Motor neuron (in vitro differentiated cells): ENCODE measurements at regions of chr19 and their contacts with region 1.

Region 1: DNA sequence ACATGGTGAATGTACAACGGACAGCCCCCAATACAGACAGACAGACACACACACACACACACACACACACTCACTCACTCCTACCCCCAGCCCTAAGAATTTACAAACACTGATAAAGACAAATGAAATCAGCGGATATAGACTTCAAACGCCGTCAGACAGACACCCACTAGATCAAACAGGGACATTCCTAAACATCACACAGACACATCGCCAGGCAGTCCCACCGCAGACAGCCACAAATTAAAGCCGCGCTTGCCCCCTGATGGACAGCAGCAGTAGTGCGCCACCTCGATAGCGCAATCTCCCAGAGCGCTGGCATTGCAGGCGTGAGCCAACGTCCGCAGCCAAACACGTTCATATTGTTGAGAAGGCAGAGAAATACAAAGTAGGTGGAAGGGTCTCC is 24.7 kb upstream of the ADGRE1 start:
- ATAC-seq: peak; percentile 67 to 95 (median 78)
- H3K4me3 ChIP-seq: no peak overlapping the region
- H3K27ac ChIP-seq: no peak overlapping the region
- H3K4me1 ChIP-seq: no peaks in the 10 kb centered on the region

Region 2: DNA sequence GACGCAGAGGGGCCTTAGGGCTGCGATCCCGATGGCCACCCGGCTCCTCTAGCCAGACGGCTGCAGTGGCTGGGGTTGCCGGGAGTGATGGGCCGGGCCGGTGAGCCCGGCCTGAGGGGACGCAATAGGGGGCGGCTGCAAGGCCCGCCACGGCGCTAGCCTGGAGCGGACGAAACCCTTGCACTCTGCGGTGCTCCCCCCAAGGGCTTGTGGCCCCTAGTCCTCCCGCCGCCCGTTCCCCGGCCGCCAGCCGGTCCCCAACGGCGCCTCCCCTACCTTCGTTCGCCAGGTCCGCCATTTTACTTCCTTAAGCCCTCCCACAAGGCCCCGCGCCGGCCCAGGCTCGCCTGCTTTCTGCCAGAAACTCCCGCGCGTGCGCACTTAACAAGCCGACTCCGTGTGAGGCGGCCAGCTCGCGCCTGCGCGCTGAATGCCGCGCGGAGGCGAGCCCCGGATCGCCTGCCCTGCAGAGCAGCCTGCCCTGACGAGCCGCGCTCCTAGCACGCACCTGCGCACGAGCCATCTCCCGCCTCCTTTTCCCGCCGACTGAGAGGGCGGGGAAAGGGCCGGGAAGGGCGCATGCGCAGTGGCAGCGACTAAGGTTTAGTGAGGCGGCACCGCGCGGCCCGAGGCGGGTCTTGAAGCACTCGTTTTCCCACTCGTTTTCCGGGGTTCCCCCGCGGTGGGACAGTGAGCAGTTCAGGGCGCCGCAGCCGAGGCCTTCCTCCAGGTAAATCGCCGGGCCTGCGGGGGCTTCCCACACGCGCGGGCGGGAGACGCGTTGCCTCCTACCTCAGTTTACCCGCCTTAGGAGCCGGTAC is 884.7 kb before region 1 on chr19 and contains the start of gene RANBP3:
- in situ Hi-C with region 1: loop called in 1 of 9 experiments (anchors 25 kb)
- ATAC-seq: peak; percentile 87 to 98 (median 94)
- H3K4me3 ChIP-seq: peak within 1 kb of the TSS; percentile 65 to 88 (median 82)
- H3K27ac ChIP-seq: peak within 1 kb of the TSS; percentile 89 to 94
- H3K4me1 ChIP-seq: peaks cover 34 to 40% of the 10 kb centered on the region in 2 donors
- total RNA-seq, gene RANBP3: 31.5 to 69.1 (median 41.0) TPM

Region 3: DNA sequence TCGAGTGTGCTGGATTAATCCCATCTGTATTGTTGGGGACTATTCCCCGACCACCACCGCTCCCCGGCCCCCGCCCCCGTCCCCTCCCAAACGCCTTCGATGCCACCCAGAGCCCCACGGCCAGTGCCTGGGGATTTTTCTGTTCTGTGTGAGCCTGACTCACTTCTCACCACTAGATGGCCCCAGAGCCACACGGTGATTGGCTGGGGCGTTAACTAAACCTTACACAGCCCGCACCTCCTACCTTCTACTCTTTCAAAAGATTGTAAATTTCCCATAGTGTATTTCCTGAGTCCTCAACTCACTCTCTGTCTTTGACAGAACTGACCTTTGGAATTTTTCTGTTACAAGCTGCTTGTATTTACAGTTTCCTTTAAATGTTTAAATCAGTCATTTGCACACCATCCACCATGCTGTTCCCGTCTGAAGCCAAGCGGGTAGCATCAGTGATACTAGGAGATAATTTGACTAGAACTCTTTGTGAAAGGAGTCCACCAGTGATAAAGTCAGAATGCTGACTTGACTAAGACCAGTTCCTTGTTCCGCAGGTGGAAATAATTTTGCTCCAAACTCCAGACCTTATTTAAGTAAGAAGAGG is 813.8 kb before region 1 on chr19:
- in situ Hi-C with region 1: loop called in 2 of 9 experiments (anchors 25 kb)
- ATAC-seq: peak; percentile 98 to 100 (median 99)
- H3K4me3 ChIP-seq: peak overlapping the region in 3 of 5 donors; percentile 10 to 26 (median 25)
- H3K27ac ChIP-seq: no peak overlapping the region
- H3K4me1 ChIP-seq: peaks cover 0 to 8% of the 10 kb centered on the region in 2 donors

Region 4: DNA sequence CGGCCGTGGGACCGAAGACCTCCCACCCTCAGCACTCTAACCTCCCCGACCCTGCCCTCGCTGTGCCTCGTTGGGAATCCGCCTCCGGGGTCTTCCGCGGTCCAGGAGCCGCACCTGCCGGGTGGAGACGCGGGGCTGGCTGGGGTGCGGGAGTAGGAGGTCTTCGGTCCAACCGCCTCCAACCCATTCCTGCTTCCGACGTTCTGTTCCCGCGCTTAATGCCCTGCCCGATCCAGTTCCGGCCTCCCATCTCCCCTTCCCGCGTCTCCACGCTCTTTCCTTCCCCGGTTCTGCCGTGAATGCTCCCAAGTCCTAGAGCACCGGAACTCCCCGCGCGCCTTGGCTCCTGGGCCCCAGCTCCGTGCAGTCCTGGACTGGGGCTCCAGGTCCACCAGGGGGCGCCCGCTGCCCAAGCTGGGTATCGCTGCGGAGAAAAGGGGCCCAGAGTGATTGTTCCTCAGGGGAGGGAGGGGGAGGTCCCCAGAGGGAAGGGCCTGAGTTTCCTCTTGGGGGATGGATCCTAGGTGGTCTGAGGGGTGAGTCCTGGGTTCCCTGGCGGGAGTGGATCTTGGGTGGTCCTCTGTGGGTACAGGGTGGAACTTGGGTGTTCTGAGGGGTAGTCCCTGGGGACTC is 345.9 kb before region 1 on chr19:
- in situ Hi-C with region 1: loop called in 1 of 9 experiments (anchors 10 kb)
- ATAC-seq: peak; percentile 72 to 81 (median 75)
- H3K4me3 ChIP-seq: peak overlapping the region; percentile 29 to 51 (median 45)
- H3K27ac ChIP-seq: peak overlapping the region; percentile 29 to 74
- H3K4me1 ChIP-seq: peaks cover 4 to 5% of the 10 kb centered on the region in 2 donors

Region 5: GRCh38 chr19:6632002-6632621 is 230.6 kb before region 1 on chr19:
- in situ Hi-C with region 1: loop called in 3 of 9 experiments (anchors 25 kb)
- ATAC-seq: peak in 4 of 8 experiments; percentile 29 to 71 (median 59)
- H3K4me3 ChIP-seq: no peak overlapping the region
- H3K27ac ChIP-seq: no peak overlapping the region
- H3K4me1 ChIP-seq: no peaks in the 10 kb centered on the region

Region 6: GRCh38 chr19:6737284-6738046 is 125.2 kb before region 1 on chr19 and contains the start of gene GPR108:
- in situ Hi-C with region 1: loop called in 1 of 9 experiments (anchors 10 kb)
- ATAC-seq: peak; percentile 70 to 85 (median 81)
- H3K4me3 ChIP-seq: peak within 1 kb of the TSS; percentile 49 to 72 (median 57)
- H3K27ac ChIP-seq: peak within 1 kb of the TSS; percentile 98 to 99
- H3K4me1 ChIP-seq: peaks cover 20 to 26% of the 10 kb centered on the region in 2 donors
- total RNA-seq, gene GPR108: 19.0 to 76.9 (median 31.0) TPM